ENCODE measurements at regions of chr9 and their contacts with region 1.

Region 1: DNA sequence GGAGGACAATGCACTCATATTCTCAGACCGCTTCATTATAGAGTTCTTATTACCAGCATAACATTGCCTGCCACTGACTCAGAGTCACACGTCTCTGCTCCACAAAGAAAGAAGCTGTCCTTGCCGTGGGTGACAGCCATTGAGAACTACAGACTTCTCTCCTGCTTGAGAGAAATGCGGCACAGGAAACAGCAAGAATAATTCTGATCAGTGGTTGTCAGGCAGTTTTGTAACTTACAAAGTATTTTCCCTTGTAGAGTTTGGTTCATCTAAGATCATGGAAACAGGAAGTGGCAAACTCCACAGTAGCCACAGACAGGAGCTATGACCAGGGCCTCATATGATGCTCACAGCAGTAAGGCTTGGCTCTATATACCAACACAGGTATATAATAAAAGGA is 47.0 kb downstream of the KCNV2 start:
- DNase-seq: peak; percentile 85
- H3K4me3 Mint-ChIP-seq: peak overlapping the region; percentile 57
- H3K27ac Mint-ChIP-seq: peak overlapping the region; percentile 91
- H3K4me1 Mint-ChIP-seq: peaks cover 36% of the 10 kb centered on the region
- H3K27me3 Mint-ChIP-seq: no peaks in the 10 kb centered on the region

Region 2: DNA sequence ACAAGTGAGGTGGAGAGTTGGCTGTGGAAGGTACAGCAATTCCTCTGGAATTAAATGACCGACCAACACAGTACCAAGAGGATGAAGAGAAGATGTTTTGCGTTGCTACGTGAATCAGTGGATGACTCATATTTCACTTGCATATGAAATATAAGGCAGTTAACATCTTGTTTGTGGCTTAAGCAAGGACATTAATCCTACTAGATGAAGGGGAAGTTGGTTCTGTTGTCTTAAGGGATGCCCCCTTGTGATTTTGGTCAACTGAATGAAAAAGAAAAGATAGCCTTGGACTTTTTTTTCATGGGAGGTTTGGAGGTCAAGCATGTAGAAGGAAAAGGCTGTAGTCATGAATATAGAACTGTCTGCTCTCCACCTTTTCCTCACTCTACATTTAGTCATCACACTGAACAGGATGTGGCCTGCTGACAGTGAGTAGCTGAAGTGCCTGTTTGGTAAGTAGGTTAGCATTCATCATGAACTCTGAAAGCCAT is 108.9 kb before region 1 on chr9:
- intact Hi-C with region 1: loop called (anchors 10 kb)
- DNase-seq: peak; percentile 83
- H3K4me3 Mint-ChIP-seq: peak overlapping the region; percentile 53
- H3K27ac Mint-ChIP-seq: peak overlapping the region; percentile 94
- H3K4me1 Mint-ChIP-seq: peaks cover 20% of the 10 kb centered on the region
- H3K27me3 Mint-ChIP-seq: no peaks in the 10 kb centered on the region

Region 3: GRCh38 chr9:2798423-2798822 is 34.1 kb after region 1 on chr9:
- intact Hi-C with region 1: loop called (anchors 5 kb)
- DNase-seq: no peak
- H3K4me3 Mint-ChIP-seq: no peak overlapping the region
- H3K27ac Mint-ChIP-seq: peak overlapping the region; percentile 54
- H3K4me1 Mint-ChIP-seq: peaks cover 9% of the 10 kb centered on the region
- H3K27me3 Mint-ChIP-seq: no peaks in the 10 kb centered on the region

Measured in activated CD4-positive, alpha-beta T cell treated with anti-CD3 and anti-CD28 coated beads, Interleukin-2, amount 10 ng/mL, durations not matched to agents 24 days and 14 days (primary cell).